SK-N-SH (cell line): ENCODE measurements at regions of chr11 and their contacts with region 1.

Region 1: GRCh38 chr11:134071766-134072402 is 3.0 kb downstream of the JAM3 start:
- DNase-seq: no peak
- H3K4me3 ChIP-seq: no peak overlapping the region
- H3K27ac ChIP-seq: no peak overlapping the region
- H3K4me1 ChIP-seq: peaks cover 0 to 13% of the 10 kb centered on the region in 2 experiments; a peak in 2 of 4 replicates
- H3K27me3 ChIP-seq: 0 out of 2 replicates have a peak, but pooled peaks cover 5% of the 10 kb centered on the region
- CTCF ChIP-seq: peak; percentile 35
- EP300 ChIP-seq: no peak
- RAD21 ChIP-seq: no peak

Region 2: DNA sequence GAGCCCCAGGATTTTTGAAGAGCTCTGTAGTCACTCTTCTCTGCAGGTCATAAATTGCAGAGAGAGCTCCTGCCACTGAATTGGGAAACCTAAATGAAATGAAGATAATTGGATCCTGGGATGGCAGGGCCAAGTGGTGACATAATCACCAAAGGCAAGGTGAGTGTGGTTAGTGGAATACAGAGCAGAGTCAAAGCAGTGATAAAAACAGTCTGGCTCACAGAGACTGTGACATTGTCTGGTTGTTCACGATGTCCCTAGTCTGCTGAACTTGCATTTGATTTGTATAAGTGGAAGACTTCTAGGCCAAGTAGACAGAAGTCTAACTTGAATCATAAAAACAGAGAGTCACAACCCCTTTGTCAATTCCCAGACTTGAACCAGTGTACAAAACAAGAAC is 199.7 kb before region 1 on chr11:
- CTCF ChIA-PET with region 1: no interaction called
- POLR2A ChIA-PET with region 1: no interaction called
- DNase-seq: no peak
- H3K4me3 ChIP-seq: no peak overlapping the region
- H3K27ac ChIP-seq: no peak overlapping the region
- H3K4me1 ChIP-seq: no peaks in the 10 kb centered on the region
- H3K27me3 ChIP-seq: no peaks in the 10 kb centered on the region
- CTCF ChIP-seq: no peak
- EP300 ChIP-seq: no peak
- RAD21 ChIP-seq: no peak

Region 3: GRCh38 chr11:134098566-134099184 is 26.8 kb after region 1 on chr11:
- CTCF ChIA-PET with region 1: interaction called, 11 read pairs
- POLR2A ChIA-PET with region 1: no interaction called
- DNase-seq: no peak
- H3K4me3 ChIP-seq: no peak overlapping the region
- H3K27ac ChIP-seq: no peak overlapping the region
- H3K4me1 ChIP-seq: peaks cover 0 to 4% of the 10 kb centered on the region in 2 experiments; a peak in 1 of 4 replicates
- H3K27me3 ChIP-seq: no peaks in the 10 kb centered on the region
- CTCF ChIP-seq: no peak; the same call in 1 of the 2 replicates
- EP300 ChIP-seq: no peak
- RAD21 ChIP-seq: peak; percentile 51

Region 4: DNA sequence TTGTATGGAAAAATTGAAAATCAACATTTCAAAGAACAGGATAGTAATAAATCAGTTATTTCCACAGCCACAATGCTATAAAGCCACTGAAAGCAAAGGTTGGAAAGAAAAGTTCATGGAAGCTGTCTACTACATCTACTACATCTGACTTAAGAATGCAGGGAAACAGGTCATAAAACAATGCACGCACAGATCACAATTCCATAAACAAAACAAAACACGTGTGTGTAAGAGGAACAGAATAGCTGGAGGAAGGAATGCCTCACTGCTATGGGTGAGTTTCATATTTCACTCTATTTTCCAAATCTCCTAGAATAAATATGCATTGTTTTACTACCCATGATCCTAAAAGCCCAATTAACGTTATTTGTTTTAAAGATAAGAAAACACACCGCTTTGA is 85.6 kb after region 1 on chr11:
- CTCF ChIA-PET with region 1: no interaction called
- POLR2A ChIA-PET with region 1: no interaction called
- DNase-seq: no peak
- H3K4me3 ChIP-seq: no peak overlapping the region
- H3K27ac ChIP-seq: no peak overlapping the region
- H3K4me1 ChIP-seq: no peaks in the 10 kb centered on the region
- H3K27me3 ChIP-seq: no peaks in the 10 kb centered on the region
- CTCF ChIP-seq: no peak
- EP300 ChIP-seq: no peak
- RAD21 ChIP-seq: no peak